IMR-90 (cell line): ENCODE measurements at regions of chr5 and their contacts with region 1.

Region 1: DNA sequence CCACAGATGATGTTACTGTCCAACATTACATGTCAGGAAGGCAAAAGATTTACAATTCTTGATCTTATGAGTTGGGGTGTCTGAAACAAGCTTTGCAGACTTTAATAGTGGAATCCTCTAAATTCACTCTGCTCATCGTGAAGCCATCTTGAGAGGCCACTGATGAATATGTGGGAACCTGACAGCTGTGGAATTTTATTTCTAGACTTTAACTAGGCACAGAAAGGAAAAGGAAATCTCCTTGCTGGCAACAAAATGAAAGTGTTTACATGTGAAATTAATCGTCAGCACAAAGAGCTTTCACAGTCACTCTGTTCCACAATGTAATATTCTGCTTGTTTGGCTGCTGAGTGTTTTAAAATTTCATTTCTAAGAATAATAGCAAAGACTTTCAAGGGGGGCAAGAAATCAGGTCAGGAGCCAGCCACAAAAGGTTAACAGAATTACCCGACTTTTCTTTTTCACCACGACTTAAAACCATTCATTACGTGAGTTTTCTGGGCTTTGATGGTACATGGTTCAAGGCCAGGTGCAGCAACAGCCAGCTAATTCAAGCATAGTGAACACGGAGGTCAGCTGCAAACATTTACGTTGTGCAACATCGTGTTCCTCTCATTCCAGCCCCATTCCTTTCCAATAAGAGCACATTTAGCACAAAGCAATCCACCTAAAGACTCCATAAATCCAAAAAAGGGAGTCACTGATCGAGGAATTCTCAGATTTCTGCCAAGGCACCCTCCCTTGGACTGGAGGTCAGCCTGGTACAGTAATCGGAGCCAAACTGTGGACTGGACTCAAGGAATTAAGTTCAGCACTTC is 14.6 kb downstream of the NREP start:
- DNase-seq: peak; percentile 93
- ATAC-seq: peak; percentile 63
- H3K4me3 ChIP-seq: no peak overlapping the region
- H3K27ac ChIP-seq: peak overlapping the region; percentile 5; the same call in 1 of the 2 replicates
- H3K4me1 ChIP-seq: peaks cover 32% of the 10 kb centered on the region
- H3K27me3 ChIP-seq: no peaks in the 10 kb centered on the region
- CTCF ChIP-seq: no peak
- POLR2A ChIP-seq: no peak
- RAD21 ChIP-seq: no peak

Region 2: GRCh38 chr5:111472579-111472978 is 269.8 kb before region 1 on chr5:
- CTCF ChIA-PET with region 1: no interaction called
- POLR2A ChIA-PET with region 1: no interaction called
- dilution Hi-C with region 1: no loop called
- in situ Hi-C with region 1: no loop called
- intact Hi-C with region 1: no loop called
- DNase-seq: no peak
- ATAC-seq: no peak
- H3K4me3 ChIP-seq: no peak overlapping the region
- H3K27ac ChIP-seq: no peak overlapping the region
- H3K4me1 ChIP-seq: peaks cover 2% of the 10 kb centered on the region; the same call in 1 of the 2 replicates
- H3K27me3 ChIP-seq: no peaks in the 10 kb centered on the region
- CTCF ChIP-seq: no peak
- POLR2A ChIP-seq: no peak
- RAD21 ChIP-seq: no peak

Region 3: DNA sequence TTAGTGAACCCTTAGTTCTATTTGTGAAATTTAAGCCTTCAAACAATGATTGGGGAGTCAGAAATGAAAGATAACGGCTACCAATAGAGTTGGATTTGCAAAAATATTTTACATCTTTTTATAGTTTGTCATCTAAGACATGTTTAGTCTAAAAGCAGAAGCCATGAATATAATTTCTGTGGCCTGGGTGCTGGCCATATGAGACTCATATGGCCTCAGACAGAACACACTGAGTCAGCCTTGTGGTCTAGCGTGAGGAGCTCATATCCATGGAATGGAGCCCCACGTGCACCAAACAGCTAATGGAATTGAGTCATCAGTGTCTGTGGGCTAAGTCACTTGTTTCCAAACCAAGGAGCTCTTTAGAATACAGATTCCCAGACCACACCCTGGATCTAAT is 255.3 kb after region 1 on chr5:
- CTCF ChIA-PET with region 1: no interaction called
- POLR2A ChIA-PET with region 1: no interaction called
- dilution Hi-C with region 1: no loop called
- in situ Hi-C with region 1: loop called (anchors 5 kb)
- intact Hi-C with region 1: no loop called
- DNase-seq: peak; percentile 100
- ATAC-seq: peak; percentile 87
- H3K4me3 ChIP-seq: no peak overlapping the region
- H3K27ac ChIP-seq: no peak overlapping the region
- H3K4me1 ChIP-seq: peaks cover 15% of the 10 kb centered on the region
- H3K27me3 ChIP-seq: no peaks in the 10 kb centered on the region
- CTCF ChIP-seq: no peak
- POLR2A ChIP-seq: no peak
- RAD21 ChIP-seq: 0 out of 2 replicates have a peak, but pooled peaks have one; percentile 7

Region 4: GRCh38 chr5:112921833-112922817 is 1179.7 kb after region 1 on chr5 and contains the start of gene REEP5:
- CTCF ChIA-PET with region 1: no interaction called
- POLR2A ChIA-PET with region 1: no interaction called
- dilution Hi-C with region 1: no loop called
- in situ Hi-C with region 1: no loop called
- intact Hi-C with region 1: no loop called
- DNase-seq: peak; percentile 69
- ATAC-seq: peak; percentile 87
- H3K4me3 ChIP-seq: peak within 1 kb of the TSS; percentile 92
- H3K27ac ChIP-seq: peak within 1 kb of the TSS; percentile 97
- H3K4me1 ChIP-seq: peaks cover 9% of the 10 kb centered on the region
- H3K27me3 ChIP-seq: peaks cover 2% of the 10 kb centered on the region; the same call in 1 of the 2 replicates
- CTCF ChIP-seq: peak; percentile 82
- POLR2A ChIP-seq: peak; percentile 79
- RAD21 ChIP-seq: peak; percentile 59
- total RNA-seq, gene REEP5: 49.3 and 70.3 TPM in 2 replicates